Breast epithelium (tissue), 4 donors: ENCODE measurements at regions of chr11 and their contacts with region 1.

Region 1: GRCh38 chr11:69654569-69655327 is 13.8 kb downstream of the CCND1 start:
- DNase-seq: peak in 1 of 2 donors; percentile 75
- H3K4me3 ChIP-seq: peak overlapping the region in 1 of 3 donors; percentile 28
- H3K27ac ChIP-seq: peak overlapping the region; percentile 19 to 87
- H3K4me1 ChIP-seq: no peaks in the 10 kb centered on the region
- H3K27me3 ChIP-seq: no peaks in the 10 kb centered on the region
- CTCF ChIP-seq: no peak
- POLR2A ChIP-seq: no peak

Region 2: DNA sequence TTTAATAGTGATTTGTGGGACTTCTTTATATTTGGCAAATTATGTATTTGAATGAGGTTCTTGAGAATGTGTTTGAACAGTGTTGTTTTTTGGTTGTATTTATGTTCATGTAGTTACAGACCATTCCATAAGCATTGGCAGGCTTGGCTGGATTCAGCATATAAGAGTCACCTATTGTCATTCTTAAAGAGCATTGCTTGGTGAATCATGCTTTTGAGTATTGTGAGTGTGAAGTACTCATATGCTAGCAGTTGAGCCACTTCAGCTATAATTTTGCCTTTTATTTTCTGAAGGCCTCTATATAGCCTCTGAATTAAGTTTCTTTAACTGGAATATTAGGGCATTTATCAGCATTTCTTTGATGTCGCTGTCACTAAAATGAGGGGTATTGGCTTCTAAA is 1080.4 kb before region 1 on chr11:
- intact Hi-C with region 1: loop called (anchors 5 kb)
- DNase-seq: no peak
- H3K4me3 ChIP-seq: no peak overlapping the region
- H3K27ac ChIP-seq: no peak overlapping the region
- H3K4me1 ChIP-seq: no peaks in the 10 kb centered on the region
- H3K27me3 ChIP-seq: no peaks in the 10 kb centered on the region
- CTCF ChIP-seq: no peak
- POLR2A ChIP-seq: no peak

Region 3: DNA sequence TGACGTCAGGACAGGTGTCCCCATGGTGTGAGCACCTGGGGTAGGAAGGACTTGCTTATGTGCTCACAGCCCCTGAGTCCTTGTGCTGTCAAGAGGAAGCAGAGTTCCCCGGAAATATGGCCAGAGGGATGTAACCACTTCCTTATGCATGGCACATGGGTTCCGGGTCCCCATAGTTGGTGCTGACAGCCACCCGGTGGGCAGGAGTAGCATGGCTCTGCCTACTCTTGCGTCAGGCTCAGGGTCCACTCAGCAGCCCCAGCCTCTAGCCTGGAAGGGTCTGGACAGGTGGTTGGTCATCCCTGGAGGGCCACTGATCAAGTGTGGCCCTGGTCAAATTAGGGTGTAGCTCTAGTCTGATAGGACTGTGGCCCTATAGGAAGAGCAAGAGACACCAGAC is 56.6 kb before region 1 on chr11:
- intact Hi-C with region 1: no loop called
- DNase-seq: no peak
- H3K4me3 ChIP-seq: no peak overlapping the region
- H3K27ac ChIP-seq: no peak overlapping the region
- H3K4me1 ChIP-seq: no peaks in the 10 kb centered on the region
- H3K27me3 ChIP-seq: no peaks in the 10 kb centered on the region
- CTCF ChIP-seq: no peak
- POLR2A ChIP-seq: no peak